ENCODE measurements at regions of chr12 and their contacts with region 1.

Region 1: GRCh38 chr12:13049816-13050215 is 5.6 kb downstream of the FAM234B start:
- DNase-seq: no peak
- ATAC-seq: no peak
- H3K4me3 ChIP-seq: no peak overlapping the region
- H3K27ac ChIP-seq: no peak overlapping the region
- H3K4me1 ChIP-seq: 0 out of 2 replicates have a peak, but pooled peaks cover 4% of the 10 kb centered on the region
- H3K27me3 ChIP-seq: no peaks in the 10 kb centered on the region
- CTCF ChIP-seq: no peak

Region 2: GRCh38 chr12:13007540-13008233 is 42.1 kb before region 1 on chr12:
- CTCF ChIA-PET with region 1: no interaction called
- POLR2A ChIA-PET with region 1: interaction called, 15 read pairs
- intact Hi-C with region 1: no loop called
- DNase-seq: no peak
- ATAC-seq: no peak
- H3K4me3 ChIP-seq: no peak overlapping the region
- H3K27ac ChIP-seq: no peak overlapping the region
- H3K4me1 ChIP-seq: no peaks in the 10 kb centered on the region
- H3K27me3 ChIP-seq: no peaks in the 10 kb centered on the region
- CTCF ChIP-seq: no peak

Region 3: DNA sequence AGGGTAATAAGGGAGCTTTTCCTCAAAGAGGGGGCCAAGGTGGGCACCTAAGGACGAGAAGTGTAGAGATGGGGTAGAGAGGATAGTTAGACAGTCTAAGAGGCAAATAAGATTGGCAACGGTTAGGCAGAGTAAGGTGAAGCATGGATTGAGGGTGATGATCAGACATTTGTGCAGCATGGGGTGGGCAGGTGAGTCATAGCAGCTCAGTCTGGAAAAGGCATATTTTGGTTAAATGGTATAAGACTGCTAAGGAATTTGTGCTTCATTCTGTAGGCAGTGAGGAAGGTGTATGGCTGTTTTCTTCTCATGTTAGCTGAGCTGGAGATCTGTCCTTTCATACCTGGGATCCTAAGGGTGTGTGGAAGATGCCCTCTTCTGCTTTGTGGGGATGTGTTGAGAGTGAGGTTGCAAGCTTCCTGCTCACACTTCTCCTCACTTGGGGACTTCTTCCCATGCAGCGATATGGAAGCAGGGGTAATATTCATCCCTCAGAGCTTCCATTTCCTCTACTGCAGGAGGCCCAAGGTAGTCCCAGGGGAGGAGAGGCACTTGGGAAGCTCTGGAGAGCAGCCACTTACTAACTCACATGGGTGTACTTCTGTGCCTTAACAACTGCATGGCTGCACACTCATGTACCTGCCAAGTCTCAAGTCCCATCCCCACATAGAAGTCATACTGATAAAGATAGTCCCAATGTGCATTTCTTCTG is 24.7 kb after region 1 on chr12:
- CTCF ChIA-PET with region 1: no interaction called
- POLR2A ChIA-PET with region 1: no interaction called
- intact Hi-C with region 1: loop called (anchors 1 kb)
- DNase-seq: no peak
- ATAC-seq: no peak
- H3K4me3 ChIP-seq: no peak overlapping the region
- H3K27ac ChIP-seq: no peak overlapping the region
- H3K4me1 ChIP-seq: peaks cover 3% of the 10 kb centered on the region
- H3K27me3 ChIP-seq: no peaks in the 10 kb centered on the region
- CTCF ChIP-seq: no peak

Measured in PC-3 (cell line).